ENCODE measurements at regions of chr6 and their contacts with region 1.

Region 1: GRCh38 chr6:134288538-134289203 is 29.2 kb downstream of the SGK1 start:
- DNase-seq: peak; percentile 97
- H3K4me3 ChIP-seq: peak overlapping the region in 1 of 3 experiments; percentile 4
- H3K27ac ChIP-seq: peak overlapping the region; percentile 100
- H3K4me1 ChIP-seq: peaks cover 19% of the 10 kb centered on the region
- H3K27me3 ChIP-seq: no peaks in the 10 kb centered on the region
- CTCF ChIP-seq: no peak

Region 2: DNA sequence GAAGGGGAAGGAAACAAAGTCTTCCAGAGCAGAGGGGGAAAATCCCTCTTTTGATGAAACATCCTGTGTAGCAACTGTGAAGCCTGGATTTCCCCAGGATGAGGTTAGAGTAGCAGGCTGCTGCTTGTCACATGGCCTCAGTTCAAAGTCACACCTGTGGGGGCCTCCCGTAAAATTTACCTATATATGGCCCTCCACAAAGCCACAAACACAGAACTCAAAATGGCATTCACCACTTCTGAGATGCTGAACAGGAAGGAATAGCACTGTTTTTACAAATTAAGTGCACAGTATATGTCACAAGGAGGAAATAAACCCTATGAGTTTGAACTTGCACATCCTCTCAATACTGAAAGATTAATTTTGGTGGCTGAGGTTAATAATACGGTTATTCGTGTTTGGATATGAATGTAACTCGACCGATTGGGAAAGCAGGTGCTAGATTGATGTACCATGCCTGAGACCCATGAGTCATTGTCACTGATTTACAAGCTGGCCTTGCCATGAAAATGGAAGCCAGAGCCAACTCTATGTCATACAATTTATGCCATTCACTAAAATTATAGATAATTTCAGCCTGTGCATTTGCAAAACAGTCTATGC is 41.3 kb before region 1 on chr6:
- CTCF ChIA-PET with region 1: no interaction called
- dilution Hi-C with region 1: no loop called
- in situ Hi-C with region 1: no loop called
- intact Hi-C with region 1: loop called (anchors 1 kb)
- DNase-seq: peak; percentile 78
- H3K4me3 ChIP-seq: no peak overlapping the region
- H3K27ac ChIP-seq: peak overlapping the region; percentile 37
- H3K4me1 ChIP-seq: peaks cover 22% of the 10 kb centered on the region
- H3K27me3 ChIP-seq: no peaks in the 10 kb centered on the region
- CTCF ChIP-seq: no peak

Region 3: DNA sequence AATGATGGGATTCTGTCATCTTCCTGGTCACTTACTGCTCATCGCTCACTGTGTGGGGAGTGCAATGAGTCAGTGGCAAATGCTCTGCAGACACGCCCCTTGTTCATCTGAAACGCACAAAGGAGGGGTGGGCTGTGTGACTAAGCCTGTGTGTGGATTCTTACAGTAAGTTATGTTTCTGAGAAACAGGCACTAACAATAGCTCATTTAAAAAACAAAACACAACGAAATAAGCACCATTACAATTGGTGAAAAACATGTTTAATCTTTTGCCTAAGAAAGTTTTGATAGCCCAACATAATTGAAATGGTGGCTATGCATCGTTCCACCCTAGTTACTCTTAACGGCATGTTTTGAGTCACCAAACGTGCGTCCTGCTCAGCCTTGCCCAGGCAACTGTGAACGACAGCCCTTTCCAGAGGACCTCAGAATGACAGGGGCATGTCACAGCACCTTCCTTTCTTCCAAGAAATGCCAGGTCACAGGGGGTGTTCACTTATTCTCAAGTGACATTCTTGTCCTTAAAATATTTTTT is 147.7 kb after region 1 on chr6:
- CTCF ChIA-PET with region 1: no interaction called
- dilution Hi-C with region 1: no loop called
- in situ Hi-C with region 1: no loop called
- intact Hi-C with region 1: loop called (anchors 1 kb)
- DNase-seq: peak; percentile 97
- H3K4me3 ChIP-seq: peak overlapping the region in 1 of 3 experiments; percentile 8
- H3K27ac ChIP-seq: peak overlapping the region; percentile 98
- H3K4me1 ChIP-seq: peaks cover 33% of the 10 kb centered on the region
- H3K27me3 ChIP-seq: no peaks in the 10 kb centered on the region
- CTCF ChIP-seq: no peak

Region 4: GRCh38 chr6:134589512-134589911 is 300.8 kb after region 1 on chr6:
- CTCF ChIA-PET with region 1: no interaction called
- dilution Hi-C with region 1: no loop called
- in situ Hi-C with region 1: no loop called
- intact Hi-C with region 1: loop called (anchors 1 kb)
- DNase-seq: peak; percentile 96
- H3K4me3 ChIP-seq: no peak overlapping the region
- H3K27ac ChIP-seq: peak overlapping the region; percentile 84
- H3K4me1 ChIP-seq: peaks cover 24% of the 10 kb centered on the region
- H3K27me3 ChIP-seq: no peaks in the 10 kb centered on the region
- CTCF ChIP-seq: no peak

Region 5: GRCh38 chr6:134853111-134854055 is 564.7 kb after region 1 on chr6:
- CTCF ChIA-PET with region 1: no interaction called
- dilution Hi-C with region 1: no loop called
- in situ Hi-C with region 1: no loop called
- intact Hi-C with region 1: no loop called
- DNase-seq: peak; percentile 64
- H3K4me3 ChIP-seq: no peak overlapping the region
- H3K27ac ChIP-seq: no peak overlapping the region
- H3K4me1 ChIP-seq: peaks cover 12% of the 10 kb centered on the region
- H3K27me3 ChIP-seq: no peaks in the 10 kb centered on the region
- CTCF ChIP-seq: no peak